ENCODE measurements at regions of chr1 and their contacts with region 1.

Region 1: GRCh38 chr1:39954816-39955546 is at the start of gene MFSD2A:
- DNase-seq: peak; percentile 94
- H3K4me3 Mint-ChIP-seq: peak within 1 kb of the TSS; percentile 84
- H3K27ac Mint-ChIP-seq: peak within 1 kb of the TSS; percentile 75
- H3K4me1 Mint-ChIP-seq: peaks cover 30% of the 10 kb centered on the region
- H3K27me3 Mint-ChIP-seq: no peaks in the 10 kb centered on the region
- total RNA-seq, gene MFSD2A: 6.0 to 7.5 TPM

Region 2: GRCh38 chr1:40014812-40015594 is 60.0 kb after region 1 on chr1:
- CTCF ChIA-PET with region 1: no interaction called
- POLR2A ChIA-PET with region 1: no interaction called
- intact Hi-C with region 1: loop called (anchors 5 kb)
- DNase-seq: peak; percentile 38
- H3K4me3 Mint-ChIP-seq: no peak overlapping the region
- H3K27ac Mint-ChIP-seq: no peak overlapping the region
- H3K4me1 Mint-ChIP-seq: peaks cover 22% of the 10 kb centered on the region
- H3K27me3 Mint-ChIP-seq: no peaks in the 10 kb centered on the region